HepG2 (cell line): ENCODE measurements at regions of chr9 and their contacts with region 1.

Region 1: GRCh38 chr9:33151007-33151557 is 16.1 kb downstream of the B4GALT1 start:
- DNase-seq: peak; percentile 63
- ATAC-seq: peak; percentile 99
- H3K4me3 ChIP-seq: no peak overlapping the region
- H3K27ac ChIP-seq: peak overlapping the region; percentile 32
- H3K4me1 ChIP-seq: peaks cover 42% of the 10 kb centered on the region
- H3K27me3 ChIP-seq: no peaks in the 10 kb centered on the region
- CTCF ChIP-seq: no peak
- EP300 ChIP-seq: no peak
- POLR2A ChIP-seq: no peak
- RAD21 ChIP-seq: no peak

Region 2: DNA sequence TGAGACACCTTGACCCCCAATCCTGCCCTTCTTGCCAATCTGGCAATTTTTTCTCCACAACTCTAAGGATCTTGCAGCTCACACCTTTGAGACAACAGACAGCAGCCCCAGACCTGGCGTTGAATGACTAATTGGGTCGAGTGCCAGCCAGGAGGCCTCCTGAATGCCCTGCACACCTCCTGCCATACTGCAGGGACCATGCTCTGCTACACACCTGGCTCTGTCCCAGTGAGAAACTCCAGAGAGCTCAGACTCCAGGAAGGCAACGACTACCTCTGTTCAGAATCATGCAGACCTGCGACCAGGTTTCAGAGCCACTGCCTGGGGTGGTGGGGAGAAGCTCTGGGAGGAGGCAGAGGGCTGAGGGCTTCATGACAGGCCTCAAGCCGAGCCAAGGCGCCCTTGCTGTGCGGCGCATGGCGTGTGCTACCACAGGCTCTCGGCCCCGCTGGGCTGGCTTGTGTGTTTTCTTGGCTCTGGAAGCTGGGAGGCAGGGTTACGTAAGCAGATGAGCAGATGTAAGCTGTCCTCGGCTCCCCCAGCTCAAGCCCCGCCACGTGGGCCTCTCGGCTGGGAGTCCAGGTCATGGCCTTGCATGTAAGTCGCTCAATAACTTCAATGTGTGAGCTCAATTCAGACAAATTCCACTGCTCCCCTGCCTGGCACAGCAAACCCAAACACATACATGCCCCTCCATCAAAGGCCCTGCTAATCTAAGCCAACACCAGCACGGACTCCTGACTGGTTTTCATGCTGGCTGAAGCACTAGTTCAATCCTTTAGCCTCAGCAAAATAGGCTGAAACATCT is 11.5 kb before region 1 on chr9:
- CTCF ChIA-PET with region 1: no interaction called
- POLR2A ChIA-PET with region 1: interaction called, 4 read pairs
- in situ Hi-C with region 1: no loop called
- intact Hi-C with region 1: loop called (anchors 1 kb)
- DNase-seq: peak; percentile 88
- ATAC-seq: peak; percentile 93
- H3K4me3 ChIP-seq: peak overlapping the region in 1 of 3 experiments; percentile 39; a peak in 2 of 6 replicates
- H3K27ac ChIP-seq: peak overlapping the region; percentile 69
- H3K4me1 ChIP-seq: peaks cover 49% of the 10 kb centered on the region
- H3K27me3 ChIP-seq: no peaks in the 10 kb centered on the region
- CTCF ChIP-seq: peak; percentile 43
- EP300 ChIP-seq: peak in 1 of 2 experiments; percentile 67; a peak in 1 of 4 replicates
- POLR2A ChIP-seq: 0 out of 4 replicates have a peak, but pooled peaks of 1 of the 2 experiments have one; percentile 22
- RAD21 ChIP-seq: 0 out of 2 replicates have a peak, but pooled peaks have one; percentile 18

Region 3: DNA sequence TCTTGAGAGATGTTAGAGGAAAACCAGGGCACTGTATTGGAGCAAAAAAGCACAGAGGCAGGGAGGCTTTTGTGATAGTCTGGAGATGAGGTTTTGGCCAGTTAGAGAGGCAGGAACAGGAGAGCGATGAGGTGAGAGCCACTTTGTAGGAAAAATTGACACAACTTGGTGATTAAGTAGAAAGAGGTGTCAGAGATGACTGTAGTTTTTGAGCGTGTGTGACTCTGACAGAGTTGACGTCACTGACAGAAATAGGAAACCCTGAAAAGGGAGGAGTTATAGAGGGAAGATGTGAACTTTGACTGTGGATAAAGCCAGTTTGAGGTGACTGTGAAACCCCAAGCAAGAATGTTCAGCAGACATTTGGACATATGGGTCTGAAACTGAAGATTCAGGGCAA is 155.0 kb after region 1 on chr9:
- CTCF ChIA-PET with region 1: no interaction called
- POLR2A ChIA-PET with region 1: no interaction called
- in situ Hi-C with region 1: no loop called
- intact Hi-C with region 1: no loop called
- DNase-seq: no peak
- ATAC-seq: no peak
- H3K4me3 ChIP-seq: no peak overlapping the region
- H3K27ac ChIP-seq: no peak overlapping the region
- H3K4me1 ChIP-seq: peaks cover under 1% of the 10 kb centered on the region; the same call in 1 of the 2 replicates
- H3K27me3 ChIP-seq: no peaks in the 10 kb centered on the region
- CTCF ChIP-seq: no peak
- EP300 ChIP-seq: no peak
- POLR2A ChIP-seq: no peak
- RAD21 ChIP-seq: no peak